Activated CD8-positive, alpha-beta T cell treated with anti-CD3 and anti-CD28 coated beads for 36 hours (primary cell): ENCODE measurements at regions of chr1 and their contacts with region 1.

Region 1: GRCh38 chr1:100866041-100866900 is 28.4 kb downstream of the EXTL2 start:
- DNase-seq: no peak
- ATAC-seq: no peak
- H3K4me3 Mint-ChIP-seq: no peak overlapping the region
- H3K27ac Mint-ChIP-seq: no peak overlapping the region
- H3K4me1 Mint-ChIP-seq: no peaks in the 10 kb centered on the region
- H3K27me3 Mint-ChIP-seq: no peaks in the 10 kb centered on the region
- CTCF ChIP-seq: peak; percentile 63

Region 2: GRCh38 chr1:99808391-99809115 is 1057.7 kb before region 1 on chr1:
- CTCF ChIA-PET with region 1: interaction called, 5 read pairs
- POLR2A ChIA-PET with region 1: no interaction called
- intact Hi-C with region 1: loop called (anchors 5 kb)
- DNase-seq: peak; percentile 45
- ATAC-seq: peak; percentile 84
- H3K4me3 Mint-ChIP-seq: peak overlapping the region; percentile 5
- H3K27ac Mint-ChIP-seq: peak overlapping the region; percentile 58
- H3K4me1 Mint-ChIP-seq: peaks cover 18% of the 10 kb centered on the region
- H3K27me3 Mint-ChIP-seq: peaks cover 13% of the 10 kb centered on the region
- CTCF ChIP-seq: peak; percentile 77

Region 3: GRCh38 chr1:100530880-100531487 is 335.3 kb before region 1 on chr1:
- CTCF ChIA-PET with region 1: no interaction called
- POLR2A ChIA-PET with region 1: no interaction called
- intact Hi-C with region 1: loop called (anchors 10 kb)
- DNase-seq: peak; percentile 55
- ATAC-seq: peak; percentile 95
- H3K4me3 Mint-ChIP-seq: no peak overlapping the region
- H3K27ac Mint-ChIP-seq: peak overlapping the region; percentile 62
- H3K4me1 Mint-ChIP-seq: peaks cover 33% of the 10 kb centered on the region
- H3K27me3 Mint-ChIP-seq: peaks cover 2% of the 10 kb centered on the region
- CTCF ChIP-seq: no peak

Region 4: DNA sequence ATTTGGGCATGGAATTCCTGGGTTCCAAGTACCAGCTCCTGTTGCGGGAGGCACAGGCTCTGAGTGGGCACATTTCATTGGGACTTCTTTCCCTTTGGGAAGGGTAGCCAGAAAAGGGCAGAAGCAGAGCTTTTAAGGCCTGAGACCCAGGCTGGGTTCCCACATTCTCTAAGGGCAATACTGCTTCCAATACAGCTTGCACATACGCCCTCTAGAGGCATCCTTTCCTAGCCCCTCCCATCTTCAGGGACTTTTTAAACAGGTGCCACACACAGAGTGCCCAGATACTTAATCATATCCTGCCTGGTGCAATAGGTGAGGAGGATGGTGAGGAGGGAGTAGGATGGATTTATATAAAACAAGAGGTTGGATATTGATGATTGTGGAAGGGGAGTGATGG is 322.6 kb before region 1 on chr1:
- CTCF ChIA-PET with region 1: interaction called, 10 read pairs
- POLR2A ChIA-PET with region 1: no interaction called
- intact Hi-C with region 1: loop called (anchors 10 kb)
- DNase-seq: peak; percentile 74
- ATAC-seq: peak; percentile 83
- H3K4me3 Mint-ChIP-seq: no peak overlapping the region
- H3K27ac Mint-ChIP-seq: no peak overlapping the region
- H3K4me1 Mint-ChIP-seq: peaks cover 6% of the 10 kb centered on the region
- H3K27me3 Mint-ChIP-seq: peaks cover 32% of the 10 kb centered on the region
- CTCF ChIP-seq: peak; percentile 60

Region 5: DNA sequence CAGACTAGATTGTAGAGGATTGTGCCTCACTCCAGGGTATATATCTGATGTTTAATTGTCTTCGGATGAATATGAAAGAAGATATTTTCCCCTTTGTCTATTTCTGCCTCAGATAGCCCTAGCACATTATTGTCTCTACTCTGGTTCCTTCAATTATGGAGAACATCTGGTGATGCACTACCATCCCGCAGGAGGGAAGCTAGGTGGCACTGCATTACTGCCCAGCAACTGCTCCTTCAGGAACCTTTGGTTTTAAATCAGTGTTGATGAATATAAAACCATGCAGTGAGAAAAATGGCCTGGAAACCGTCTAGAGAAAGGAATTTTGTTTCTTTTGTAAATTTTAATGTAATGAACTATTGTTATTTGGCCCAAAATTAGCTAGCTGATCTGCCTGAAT is 259.8 kb before region 1 on chr1:
- CTCF ChIA-PET with region 1: interaction called, 16 read pairs
- POLR2A ChIA-PET with region 1: no interaction called
- intact Hi-C with region 1: loop called (anchors 2 kb)
- DNase-seq: peak; percentile 44
- ATAC-seq: no peak
- H3K4me3 Mint-ChIP-seq: no peak overlapping the region
- H3K27ac Mint-ChIP-seq: no peak overlapping the region
- H3K4me1 Mint-ChIP-seq: no peaks in the 10 kb centered on the region
- H3K27me3 Mint-ChIP-seq: peaks cover 4% of the 10 kb centered on the region
- CTCF ChIP-seq: peak; percentile 53

Region 6: DNA sequence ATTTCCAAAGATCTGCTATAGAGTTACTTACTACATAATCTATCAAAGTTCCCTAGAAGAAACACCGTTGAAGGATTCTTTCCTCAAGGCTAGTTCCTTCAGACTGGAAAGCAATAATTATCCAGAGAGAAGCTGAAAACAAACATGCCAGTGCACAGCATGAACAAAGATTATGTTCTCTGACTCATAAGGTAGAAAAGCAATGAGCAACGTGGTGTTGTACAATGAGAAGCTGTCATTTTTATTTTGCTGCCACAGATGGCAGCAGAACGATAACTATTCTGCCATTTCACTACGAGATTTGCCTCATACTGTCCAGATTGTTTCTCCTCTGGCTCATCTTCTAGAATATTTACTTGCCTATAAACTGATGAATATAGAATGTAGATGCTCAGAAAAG is 17.7 kb after region 1 on chr1:
- CTCF ChIA-PET with region 1: interaction called, 18 read pairs
- POLR2A ChIA-PET with region 1: no interaction called
- intact Hi-C with region 1: no loop called
- DNase-seq: no peak
- ATAC-seq: no peak
- H3K4me3 Mint-ChIP-seq: no peak overlapping the region
- H3K27ac Mint-ChIP-seq: no peak overlapping the region
- H3K4me1 Mint-ChIP-seq: peaks cover 11% of the 10 kb centered on the region
- H3K27me3 Mint-ChIP-seq: no peaks in the 10 kb centered on the region
- CTCF ChIP-seq: no peak